ENCODE measurements at regions of chr5 and their contacts with region 1.

Region 1: DNA sequence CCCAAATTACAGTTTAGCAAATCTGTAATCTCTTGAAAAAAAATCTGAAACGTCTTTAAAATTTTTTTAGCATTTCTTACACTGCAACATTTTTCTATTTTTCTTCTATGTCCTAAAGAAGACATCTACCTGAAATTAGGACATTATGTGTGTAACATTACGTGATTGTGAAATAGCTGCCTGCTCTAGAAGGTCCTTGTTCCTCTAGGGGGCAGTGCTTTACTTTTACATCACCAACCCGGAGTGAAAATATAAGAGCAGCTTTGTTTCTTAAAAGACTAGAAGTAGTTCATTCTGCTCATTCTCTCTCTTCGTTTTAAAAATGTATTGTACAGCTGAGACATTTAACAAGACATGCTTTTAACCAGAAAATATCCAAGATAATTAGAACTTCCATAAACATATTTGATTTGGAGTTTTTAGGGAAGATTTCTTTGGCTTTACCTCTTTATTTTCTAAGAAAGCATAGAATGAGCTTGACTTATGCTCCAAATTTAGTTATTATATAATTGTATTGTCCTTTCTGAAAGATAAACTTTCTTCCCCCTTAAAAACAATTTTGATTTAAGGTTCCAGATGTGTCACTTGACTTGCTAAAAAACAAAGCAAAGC is 48.1 kb upstream of the RIOK2 start:
- DNase-seq: peak; percentile 22 to 66 (median 36)
- ATAC-seq: peak; percentile 90
- H3K4me3 ChIP-seq: no peak overlapping the region
- H3K27ac ChIP-seq: no peak overlapping the region
- H3K4me1 ChIP-seq: no peaks in the 10 kb centered on the region
- H3K27me3 ChIP-seq: no peaks in the 10 kb centered on the region
- CTCF ChIP-seq: peak; percentile 52 to 81 (median 69)
- EP300 ChIP-seq: no peak
- POLR2A ChIP-seq: no peak
- RAD21 ChIP-seq: peak; percentile 65 to 76

Region 2: GRCh38 chr5:97266576-97266975 is 35.4 kb after region 1 on chr5:
- CTCF ChIA-PET with region 1: no interaction called
- POLR2A ChIA-PET with region 1: no interaction called
- in situ Hi-C with region 1: no loop called
- intact Hi-C with region 1: no loop called
- DNase-seq: no peak
- ATAC-seq: no peak
- H3K4me3 ChIP-seq: no peak overlapping the region
- H3K27ac ChIP-seq: no peak overlapping the region
- H3K4me1 ChIP-seq: no peaks in the 10 kb centered on the region
- H3K27me3 ChIP-seq: no peaks in the 10 kb centered on the region
- CTCF ChIP-seq: no peak
- EP300 ChIP-seq: no peak
- POLR2A ChIP-seq: no peak
- RAD21 ChIP-seq: no peak

Region 3: DNA sequence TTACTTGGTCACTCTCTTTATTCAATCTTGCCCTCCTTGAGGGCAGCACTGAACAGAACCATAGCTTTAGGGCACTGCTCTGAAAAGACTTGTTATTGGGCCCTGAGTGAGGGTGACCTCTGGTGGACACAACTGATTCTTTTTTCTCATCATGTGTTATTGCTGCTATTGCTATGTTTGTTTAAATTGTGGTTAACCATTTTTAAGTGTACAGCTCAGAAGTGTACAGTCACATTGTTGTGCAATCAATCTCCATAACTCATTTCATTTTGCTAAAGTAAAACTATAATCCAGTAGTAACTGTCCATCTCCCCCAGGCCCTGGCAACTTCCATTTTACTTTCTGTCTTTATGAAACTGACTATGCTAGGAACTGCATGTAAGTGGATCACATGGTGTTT is 303.0 kb after region 1 on chr5:
- CTCF ChIA-PET with region 1: no interaction called
- POLR2A ChIA-PET with region 1: no interaction called
- in situ Hi-C with region 1: no loop called
- intact Hi-C with region 1: loop called (anchors 1 kb)
- DNase-seq: peak in 3 of 4 experiments; percentile 3 to 9 (median 8)
- ATAC-seq: no peak
- H3K4me3 ChIP-seq: no peak overlapping the region
- H3K27ac ChIP-seq: no peak overlapping the region
- H3K4me1 ChIP-seq: no peaks in the 10 kb centered on the region
- H3K27me3 ChIP-seq: no peaks in the 10 kb centered on the region
- CTCF ChIP-seq: peak in 2 of 3 experiments; percentile 24 to 25; a peak in 2 of 6 replicates
- EP300 ChIP-seq: no peak
- POLR2A ChIP-seq: no peak
- RAD21 ChIP-seq: peak in 1 of 2 experiments; percentile 60; a peak in 3 of 4 replicates

Region 4: DNA sequence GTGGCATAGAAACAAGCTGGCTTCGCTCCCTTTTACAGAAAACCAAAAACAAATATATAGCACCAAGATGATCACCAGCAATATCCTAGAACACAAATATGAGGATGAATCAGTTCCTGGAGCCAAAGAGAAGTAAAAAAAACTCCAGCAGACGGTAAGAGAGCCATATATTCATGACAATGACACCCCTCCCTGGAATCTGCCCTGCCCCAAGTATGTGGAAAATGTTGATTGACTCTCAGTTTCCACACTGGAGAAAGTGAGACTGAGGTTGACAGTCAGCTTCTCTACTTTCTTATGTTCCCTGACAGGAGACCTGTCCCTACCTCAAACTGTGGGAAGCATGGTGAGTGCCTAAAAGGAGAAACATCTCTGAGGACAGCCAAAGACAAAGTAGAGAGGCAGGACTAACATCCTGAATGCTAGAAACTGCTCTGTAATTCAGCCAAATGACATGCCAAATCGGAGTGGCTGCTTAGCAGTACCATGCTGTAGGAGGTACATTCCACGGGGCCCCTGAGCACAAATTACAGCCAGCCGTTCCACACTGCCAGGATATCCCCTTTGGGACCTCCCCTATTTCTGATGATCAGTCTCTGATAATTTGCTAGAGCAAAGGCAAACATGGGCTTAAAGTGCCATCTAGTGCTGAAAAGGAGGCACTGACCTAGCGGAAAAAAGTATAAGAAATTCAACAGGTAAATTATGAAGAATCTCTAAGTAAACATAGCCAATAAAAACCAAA is 1118.3 kb after region 1 on chr5:
- CTCF ChIA-PET with region 1: no interaction called
- POLR2A ChIA-PET with region 1: no interaction called
- in situ Hi-C with region 1: no loop called
- intact Hi-C with region 1: loop called (anchors 2 kb)
- DNase-seq: peak in 2 of 4 experiments; percentile 15 to 21
- ATAC-seq: no peak
- H3K4me3 ChIP-seq: no peak overlapping the region
- H3K27ac ChIP-seq: no peak overlapping the region
- H3K4me1 ChIP-seq: no peaks in the 10 kb centered on the region
- H3K27me3 ChIP-seq: no peaks in the 10 kb centered on the region
- CTCF ChIP-seq: peak; percentile 35 to 45 (median 38); a peak in 4 of 6 replicates
- EP300 ChIP-seq: no peak
- POLR2A ChIP-seq: no peak
- RAD21 ChIP-seq: peak; percentile 21 to 61; a peak in 3 of 4 replicates

Region 5: DNA sequence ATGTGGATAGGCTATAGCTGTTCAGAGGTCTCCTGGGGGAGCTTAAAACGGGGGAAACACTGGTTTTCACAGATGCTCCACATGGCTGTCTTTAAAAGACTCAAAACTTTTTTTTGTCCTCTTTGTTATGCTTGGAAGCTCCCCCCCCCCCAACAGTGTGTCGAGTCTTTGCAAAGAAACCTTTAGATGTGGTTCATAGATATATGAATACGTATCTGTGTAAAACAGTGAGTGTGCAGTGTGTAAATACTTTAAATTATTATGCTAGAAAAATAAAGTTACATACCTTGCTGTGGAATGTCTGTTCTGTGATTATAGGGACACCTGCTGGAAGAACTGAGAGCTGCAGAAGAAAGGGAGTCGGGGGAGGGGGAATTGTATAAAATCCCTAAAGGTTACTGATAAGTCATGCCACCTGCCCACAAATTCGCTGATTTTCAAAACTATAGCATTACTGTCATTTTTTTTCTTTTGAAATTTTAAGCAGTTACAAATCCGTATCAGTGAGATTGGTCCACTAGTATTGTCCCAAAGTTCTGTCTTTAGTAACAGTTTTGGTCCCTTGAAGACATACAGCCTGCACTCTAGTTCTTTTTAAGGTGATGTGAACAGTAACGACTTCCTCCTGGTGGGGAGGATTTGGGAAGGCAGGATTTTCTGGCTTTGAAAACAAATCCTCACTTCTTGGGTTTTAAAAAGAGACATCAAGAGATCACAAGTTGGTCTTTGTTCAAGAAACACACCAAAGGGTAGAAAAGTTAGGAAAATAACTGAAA is 1565.3 kb after region 1 on chr5:
- CTCF ChIA-PET with region 1: no interaction called
- POLR2A ChIA-PET with region 1: no interaction called
- in situ Hi-C with region 1: no loop called
- intact Hi-C with region 1: loop called (anchors 10 kb)
- DNase-seq: peak; percentile 51 to 68 (median 54)
- ATAC-seq: peak; percentile 91
- H3K4me3 ChIP-seq: no peak overlapping the region
- H3K27ac ChIP-seq: no peak overlapping the region
- H3K4me1 ChIP-seq: 0 out of 5 replicates have a peak, but pooled peaks cover 0 to 3% of the 10 kb centered on the region in 2 experiments
- H3K27me3 ChIP-seq: peaks cover 0 to 6% of the 10 kb centered on the region in 2 experiments; a peak in 3 of 5 replicates
- CTCF ChIP-seq: peak; percentile 52 to 75 (median 65); a peak in 5 of 6 replicates
- EP300 ChIP-seq: no peak
- POLR2A ChIP-seq: no peak
- RAD21 ChIP-seq: peak; percentile 31 to 65; a peak in 3 of 4 replicates

Region 6: GRCh38 chr5:98827161-98827560 is 1596.0 kb after region 1 on chr5:
- CTCF ChIA-PET with region 1: interaction called, 3 read pairs
- POLR2A ChIA-PET with region 1: no interaction called
- in situ Hi-C with region 1: no loop called
- intact Hi-C with region 1: loop called (anchors 1 kb)
- DNase-seq: peak; percentile 29 to 47 (median 36)
- ATAC-seq: peak; percentile 85
- H3K4me3 ChIP-seq: no peak overlapping the region
- H3K27ac ChIP-seq: no peak overlapping the region
- H3K4me1 ChIP-seq: no peaks in the 10 kb centered on the region
- H3K27me3 ChIP-seq: no peaks in the 10 kb centered on the region
- CTCF ChIP-seq: peak; percentile 39 to 63 (median 52); a peak in 5 of 6 replicates
- EP300 ChIP-seq: no peak
- POLR2A ChIP-seq: no peak
- RAD21 ChIP-seq: peak; percentile 52 to 73